ENCODE measurements at regions of chr14 and their contacts with region 1.

Region 1: DNA sequence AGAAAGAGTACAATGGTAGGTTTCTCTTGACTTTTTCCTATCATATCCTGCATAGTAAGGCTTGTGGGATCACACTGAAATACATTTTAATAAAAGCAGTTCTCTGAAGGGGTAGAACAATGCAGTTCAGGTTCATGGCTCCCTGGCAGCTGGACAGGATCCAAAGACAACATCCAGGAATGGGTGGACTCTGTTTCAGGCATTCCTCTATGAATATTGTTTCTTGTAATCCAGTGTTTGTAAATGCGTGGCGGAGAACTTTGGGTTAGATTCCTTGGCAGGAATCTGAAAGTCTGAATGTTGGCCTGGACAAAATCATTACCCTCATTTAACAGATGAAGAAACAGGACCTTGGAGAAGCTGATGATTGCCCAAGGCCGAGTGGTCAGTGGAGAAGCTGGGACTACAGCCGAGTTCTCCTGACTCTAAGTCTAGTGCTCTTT is 43.5 kb downstream of the SYNE2 start:
- DNase-seq: peak in 1 of 2 donors; percentile 85
- H3K4me3 ChIP-seq: peak overlapping the region in 1 of 2 donors; percentile 16
- H3K27ac ChIP-seq: peak overlapping the region; percentile 66 to 80
- H3K4me1 ChIP-seq: peaks cover 4 to 60% of the 10 kb centered on the region in 2 donors
- H3K27me3 ChIP-seq: no peaks in the 10 kb centered on the region
- CTCF ChIP-seq: no peak

Region 2: DNA sequence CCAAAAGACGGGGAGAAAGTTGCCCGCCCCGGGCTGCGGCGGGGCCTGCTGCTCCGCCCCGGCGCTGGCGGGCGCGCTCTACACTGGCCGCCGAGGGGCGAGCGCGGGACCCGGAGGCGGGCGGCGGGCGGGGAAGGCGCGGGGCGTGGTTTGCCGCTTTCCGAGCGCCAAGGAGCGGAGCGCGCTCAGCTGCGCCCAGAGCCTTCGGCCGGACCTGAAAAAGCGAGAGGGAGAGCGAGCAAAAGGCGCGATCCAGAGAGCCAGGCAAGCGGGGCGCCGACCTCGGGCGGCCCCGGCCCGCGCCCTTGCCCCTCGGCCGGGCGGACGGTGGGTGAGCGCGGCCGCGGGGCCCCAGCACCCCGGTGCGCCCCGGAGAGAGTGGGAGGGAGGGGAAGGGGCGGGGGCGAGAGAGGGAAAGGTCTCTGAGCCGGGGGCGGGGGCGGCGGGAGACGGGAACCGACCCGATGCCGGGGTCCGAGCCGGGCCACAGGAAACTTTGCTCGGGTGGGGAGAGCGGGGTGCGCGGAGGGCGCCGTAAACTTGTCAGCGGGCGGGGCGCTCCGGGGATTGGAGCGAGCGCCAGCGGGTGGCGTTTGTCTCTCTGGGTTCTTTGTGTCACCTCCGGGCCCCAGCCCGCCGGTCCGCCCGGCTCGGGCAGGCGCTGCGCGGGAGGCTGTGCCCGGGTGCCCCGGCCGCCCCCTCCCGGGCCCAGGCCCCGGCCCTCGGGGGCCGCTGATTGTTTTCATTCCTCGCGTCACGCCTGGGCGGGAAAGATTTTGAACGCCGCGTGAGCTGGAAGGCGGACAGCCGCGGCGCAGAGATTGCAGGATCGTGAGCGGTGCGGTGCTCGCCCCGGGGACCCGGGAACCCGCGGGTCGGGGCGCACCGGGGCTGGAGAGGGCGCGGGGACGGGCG is 43.2 kb before region 1 on chr14 and contains the start of gene SYNE2:
- intact Hi-C with region 1: loop called (anchors 2 kb)
- DNase-seq: peak in 1 of 2 donors; percentile 86
- H3K4me3 ChIP-seq: peak within 1 kb of the TSS; percentile 84 to 89
- H3K27ac ChIP-seq: peak within 1 kb of the TSS; percentile 89 to 93
- H3K4me1 ChIP-seq: peaks cover 0 to 12% of the 10 kb centered on the region in 2 donors
- H3K27me3 ChIP-seq: no peaks in the 10 kb centered on the region
- CTCF ChIP-seq: peak in 2 of 3 experiments; percentile 32 to 56
- total RNA-seq, gene SYNE2: 518 TPM

Region 3: GRCh38 chr14:63877550-63877939 is 18.8 kb before region 1 on chr14:
- intact Hi-C with region 1: loop called (anchors 1 kb)
- DNase-seq: no peak
- H3K4me3 ChIP-seq: peak overlapping the region in 1 of 2 donors; percentile 23
- H3K27ac ChIP-seq: peak overlapping the region; percentile 82 to 94
- H3K4me1 ChIP-seq: peaks cover 20 to 51% of the 10 kb centered on the region in 2 donors
- H3K27me3 ChIP-seq: no peaks in the 10 kb centered on the region
- CTCF ChIP-seq: no peak

Region 4: GRCh38 chr14:63922696-63923421 is 26.6 kb after region 1 on chr14:
- intact Hi-C with region 1: loop called (anchors 2 kb)
- DNase-seq: peak in 1 of 2 donors; percentile 84
- H3K4me3 ChIP-seq: no peak overlapping the region
- H3K27ac ChIP-seq: peak overlapping the region; percentile 73 to 85
- H3K4me1 ChIP-seq: peaks cover 0 to 16% of the 10 kb centered on the region in 2 donors
- H3K27me3 ChIP-seq: no peaks in the 10 kb centered on the region
- CTCF ChIP-seq: no peak

Region 5: DNA sequence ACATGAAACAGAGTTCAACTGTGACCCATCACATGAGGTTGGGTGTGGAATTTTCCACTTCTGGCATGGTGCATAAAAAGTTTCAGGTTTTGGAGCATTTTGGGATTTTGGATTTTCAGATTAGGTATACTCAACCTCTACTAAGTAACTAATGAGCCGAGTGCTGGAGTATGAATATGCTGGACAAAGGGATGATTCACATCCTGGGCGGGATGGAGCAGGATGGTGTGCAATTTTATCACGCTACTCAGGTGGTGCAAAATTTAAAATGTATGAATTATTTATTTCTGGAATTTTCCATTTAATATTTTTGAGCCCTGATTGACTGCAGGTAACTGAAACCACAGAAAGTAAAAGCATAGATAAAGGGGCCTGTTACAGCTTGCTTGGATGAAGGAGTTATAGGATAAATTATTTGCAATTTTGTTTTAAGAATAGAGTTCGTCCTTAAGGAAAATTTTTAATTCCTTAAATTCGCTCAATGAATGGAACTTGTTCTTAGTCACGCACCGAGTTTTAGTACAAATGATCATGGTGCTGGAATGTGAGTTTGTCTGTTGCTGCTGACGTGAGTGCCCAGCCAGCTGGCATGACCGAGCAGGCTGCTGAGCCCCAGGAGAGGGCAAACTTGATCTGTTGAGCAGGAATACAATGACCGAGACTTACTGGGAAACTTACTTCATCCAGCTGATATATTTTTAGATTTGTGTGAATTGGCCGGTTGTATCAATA is 221.5 kb after region 1 on chr14:
- intact Hi-C with region 1: loop called (anchors 10 kb)
- DNase-seq: peak; percentile 72 to 95
- H3K4me3 ChIP-seq: no peak overlapping the region
- H3K27ac ChIP-seq: peak overlapping the region; percentile 90 to 96
- H3K4me1 ChIP-seq: peaks cover 7 to 48% of the 10 kb centered on the region in 2 donors
- H3K27me3 ChIP-seq: no peaks in the 10 kb centered on the region
- CTCF ChIP-seq: no peak

Measured in ascending aorta (tissue), 2 donors.